ENCODE measurements at regions of chr20 and their contacts with region 1.

Region 1: DNA sequence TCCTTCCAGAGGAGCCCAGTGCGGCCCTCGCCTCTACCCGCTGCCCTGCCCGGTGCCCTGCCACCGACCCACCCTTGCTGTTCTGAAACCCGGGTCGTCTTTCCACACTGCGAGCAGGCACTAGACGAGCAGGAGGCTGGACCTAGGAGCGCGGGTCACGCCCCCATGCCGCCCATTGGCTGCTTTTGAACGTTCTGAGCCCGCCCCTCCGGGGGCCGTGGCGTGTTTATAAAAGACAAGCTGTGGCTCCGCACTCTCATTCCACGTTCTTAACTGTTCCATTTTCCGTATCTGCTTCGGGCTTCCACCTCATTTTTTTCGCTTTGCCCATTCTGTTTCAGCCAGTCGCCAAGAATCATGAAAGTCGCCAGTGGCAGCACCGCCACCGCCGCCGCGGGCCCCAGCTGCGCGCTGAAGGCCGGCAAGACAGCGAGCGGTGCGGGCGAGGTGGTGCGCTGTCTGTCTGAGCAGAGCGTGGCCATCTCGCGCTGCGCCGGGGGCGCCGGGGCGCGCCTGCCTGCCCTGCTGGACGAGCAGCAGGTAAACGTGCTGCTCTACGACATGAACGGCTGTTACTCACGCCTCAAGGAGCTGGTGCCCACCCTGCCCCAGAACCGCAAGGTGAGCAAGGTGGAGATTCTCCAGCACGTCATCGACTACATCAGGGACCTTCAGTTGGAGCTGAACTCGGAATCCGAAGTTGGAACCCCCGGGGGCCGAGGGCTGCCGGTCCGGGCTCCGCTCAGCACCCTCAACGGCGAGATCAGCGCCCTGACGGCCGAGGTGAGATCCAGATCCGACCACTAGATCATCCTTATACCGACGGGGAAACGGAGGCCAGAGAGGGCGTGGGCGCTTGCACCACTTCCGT is at the start of gene ID1:
- DNase-seq: peak; percentile 95
- ATAC-seq: peak; percentile 54
- H3K4me3 Mint-ChIP-seq: peak within 1 kb of the TSS; percentile 96
- H3K27ac Mint-ChIP-seq: peak within 1 kb of the TSS; percentile 99
- H3K4me1 Mint-ChIP-seq: peaks cover 42% of the 10 kb centered on the region
- H3K27me3 Mint-ChIP-seq: peaks cover 2% of the 10 kb centered on the region; the same call in 1 of the 2 replicates
- CTCF ChIP-seq: no peak
- total RNA-seq, gene ID1: 88.8 to 158 TPM (median 149 TPM) in 3 replicates

Region 2: DNA sequence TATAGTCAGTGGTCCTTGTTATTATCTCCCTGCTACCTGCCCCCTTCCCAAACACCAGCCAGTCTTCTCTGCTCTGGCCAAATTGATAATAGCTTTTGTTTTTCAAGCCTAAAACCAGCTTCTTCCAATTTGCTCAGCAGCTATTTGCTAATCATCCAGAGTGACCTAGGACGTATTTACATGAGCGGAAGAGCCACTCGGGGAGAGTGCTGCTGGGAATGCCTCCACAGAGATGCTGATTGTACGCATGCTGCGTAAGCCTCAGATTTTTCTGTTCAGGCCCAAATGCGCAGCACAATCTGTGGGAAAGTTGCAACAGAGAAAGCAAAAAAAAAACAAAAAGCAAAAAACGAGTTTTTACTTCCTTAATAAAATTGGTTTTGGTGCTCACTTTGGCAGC is 24.6 kb before region 1 on chr20:
- CTCF ChIA-PET with region 1: interaction called, 927 read pairs
- POLR2A ChIA-PET with region 1: interaction called, 28 read pairs
- DNase-seq: no peak
- ATAC-seq: peak; percentile 23
- H3K4me3 Mint-ChIP-seq: no peak overlapping the region
- H3K27ac Mint-ChIP-seq: peak overlapping the region; percentile 97
- H3K4me1 Mint-ChIP-seq: peaks cover 57% of the 10 kb centered on the region
- H3K27me3 Mint-ChIP-seq: no peaks in the 10 kb centered on the region; the same call in 1 of the 2 replicates
- CTCF ChIP-seq: no peak

Region 3: GRCh38 chr20:31587545-31588389 is 17.5 kb before region 1 on chr20:
- CTCF ChIA-PET with region 1: interaction called, 16 read pairs
- POLR2A ChIA-PET with region 1: interaction called, 22 read pairs
- DNase-seq: no peak
- ATAC-seq: peak; percentile 27
- H3K4me3 Mint-ChIP-seq: peak overlapping the region; percentile 76
- H3K27ac Mint-ChIP-seq: peak overlapping the region; percentile 50
- H3K4me1 Mint-ChIP-seq: peaks cover 56% of the 10 kb centered on the region
- H3K27me3 Mint-ChIP-seq: peaks cover 14% of the 10 kb centered on the region
- CTCF ChIP-seq: no peak

Region 4: GRCh38 chr20:31620252-31620651 is 15.0 kb after region 1 on chr20:
- CTCF ChIA-PET with region 1: no interaction called
- POLR2A ChIA-PET with region 1: no interaction called
- DNase-seq: no peak
- ATAC-seq: no peak
- H3K4me3 Mint-ChIP-seq: no peak overlapping the region
- H3K27ac Mint-ChIP-seq: no peak overlapping the region
- H3K4me1 Mint-ChIP-seq: no peaks in the 10 kb centered on the region
- H3K27me3 Mint-ChIP-seq: peaks cover 31% of the 10 kb centered on the region
- CTCF ChIP-seq: no peak

Region 5: DNA sequence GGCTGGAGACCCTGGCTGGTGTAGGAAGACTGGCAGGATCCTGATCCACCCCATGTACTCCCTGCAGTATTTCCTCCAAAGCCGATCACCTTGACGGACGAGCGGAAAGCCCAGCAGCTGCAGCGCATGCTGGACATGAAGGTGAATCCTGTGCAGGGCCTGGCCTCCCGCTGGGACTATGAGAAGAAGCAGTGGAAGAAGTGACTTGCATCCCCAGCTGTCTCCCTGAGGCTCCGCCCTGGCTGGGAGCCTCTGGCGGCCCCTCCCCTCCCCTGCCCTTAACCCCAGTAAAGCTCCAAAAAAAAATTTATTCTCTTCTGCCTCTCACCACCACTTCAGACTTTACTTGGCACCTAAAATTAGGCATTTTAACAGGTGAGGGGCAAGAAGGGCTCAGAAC is 39.4 kb after region 1 on chr20:
- CTCF ChIA-PET with region 1: no interaction called
- POLR2A ChIA-PET with region 1: no interaction called
- DNase-seq: no peak
- ATAC-seq: no peak
- H3K4me3 Mint-ChIP-seq: no peak overlapping the region
- H3K27ac Mint-ChIP-seq: no peak overlapping the region
- H3K4me1 Mint-ChIP-seq: no peaks in the 10 kb centered on the region
- H3K27me3 Mint-ChIP-seq: no peaks in the 10 kb centered on the region; the same call in 1 of the 2 replicates
- CTCF ChIP-seq: no peak

Region 6: GRCh38 chr20:31890646-31891045 is 285.4 kb after region 1 on chr20:
- CTCF ChIA-PET with region 1: no interaction called
- POLR2A ChIA-PET with region 1: no interaction called
- DNase-seq: no peak
- ATAC-seq: no peak
- H3K4me3 Mint-ChIP-seq: no peak overlapping the region
- H3K27ac Mint-ChIP-seq: no peak overlapping the region
- H3K4me1 Mint-ChIP-seq: no peaks in the 10 kb centered on the region; the same call in 1 of the 2 replicates
- H3K27me3 Mint-ChIP-seq: peaks cover 11% of the 10 kb centered on the region
- CTCF ChIP-seq: no peak